Panc1 (cell line): ENCODE measurements at regions of chr11 and their contacts with region 1.

Region 1: DNA sequence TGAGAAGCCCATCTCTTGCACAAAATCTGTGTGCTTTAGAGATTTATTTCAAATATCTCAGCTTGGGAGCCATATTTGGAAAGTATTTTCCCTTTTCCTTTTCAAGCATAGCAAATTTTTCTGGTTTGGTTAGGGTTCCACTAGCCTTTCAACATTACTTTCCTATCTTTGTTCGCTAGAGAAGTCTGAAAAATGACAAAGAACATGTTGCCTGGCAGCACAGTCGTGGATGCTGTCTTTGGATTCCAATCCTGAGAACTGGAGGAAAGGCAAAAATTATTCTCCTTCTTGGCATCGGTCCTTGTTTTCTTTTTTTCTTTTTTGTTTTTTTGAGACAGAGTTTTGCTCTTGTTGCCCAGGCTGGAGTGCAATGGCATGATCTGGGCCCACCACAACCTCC is 6.9 kb upstream of the MTCH2 start:
- DNase-seq: no peak
- ATAC-seq: no peak
- H3K4me3 ChIP-seq: no peak overlapping the region
- H3K27ac ChIP-seq: no peak overlapping the region
- H3K4me1 ChIP-seq: no peaks in the 10 kb centered on the region
- H3K27me3 ChIP-seq: no peaks in the 10 kb centered on the region
- CTCF ChIP-seq: no peak

Region 2: DNA sequence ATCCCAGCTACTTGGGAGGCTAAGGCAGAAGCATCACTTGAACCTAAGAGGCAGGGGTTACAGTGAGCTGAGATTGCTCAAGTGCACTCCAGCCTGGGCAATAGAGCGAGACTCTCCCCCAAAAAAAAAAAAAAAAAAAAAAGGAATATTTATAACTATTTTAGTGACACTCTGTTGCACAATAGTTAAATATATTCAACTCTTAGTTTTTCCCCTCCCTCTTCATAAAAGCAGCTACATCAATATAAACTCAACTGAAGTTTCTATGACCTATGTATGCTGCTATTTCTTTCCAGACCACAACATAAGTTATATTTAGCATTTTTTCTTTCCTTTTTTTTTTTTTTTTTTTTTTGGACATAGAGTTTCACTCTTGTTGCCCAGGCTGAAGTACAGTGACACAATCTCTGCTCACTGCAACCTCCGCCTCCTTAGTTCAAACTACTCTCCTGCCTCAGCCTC is 115.6 kb before region 1 on chr11:
- CTCF ChIA-PET with region 1: no interaction called
- POLR2A ChIA-PET with region 1: interaction called, 13 read pairs
- in situ Hi-C with region 1: no loop called
- intact Hi-C with region 1: no loop called
- DNase-seq: no peak
- ATAC-seq: no peak
- H3K4me3 ChIP-seq: no peak overlapping the region
- H3K27ac ChIP-seq: no peak overlapping the region
- H3K4me1 ChIP-seq: peaks cover 11% of the 10 kb centered on the region
- H3K27me3 ChIP-seq: no peaks in the 10 kb centered on the region
- CTCF ChIP-seq: no peak